ENCODE measurements at regions of chr7 and their contacts with region 1.

Region 1: GRCh38 chr7:36670585-36671431 is 53.5 kb downstream of the AOAH start:
- DNase-seq: peak; percentile 37 to 80 (median 74)
- ATAC-seq: peak; percentile 98
- H3K4me3 ChIP-seq: no peak overlapping the region
- H3K4me3 Mint-ChIP-seq: peak overlapping the region in 7 of 10 donors; percentile 13 to 84 (median 54)
- H3K27ac ChIP-seq: no peak overlapping the region
- H3K27ac Mint-ChIP-seq: peak overlapping the region in 7 of 9 donors; percentile 19 to 92 (median 64)
- H3K4me1 ChIP-seq: peaks cover 0 to 7% of the 10 kb centered on the region in 2 donors
- H3K4me1 Mint-ChIP-seq: peaks cover 17 to 44% (median 37%) of the 10 kb centered on the region in 7 donors
- H3K27me3 ChIP-seq: no peaks in the 10 kb centered on the region
- H3K27me3 Mint-ChIP-seq: no peaks in the 10 kb centered on the region

Region 2: GRCh38 chr7:36152756-36153570 is 517.8 kb before region 1 on chr7 and contains the start of gene EEPD1:
- CTCF ChIA-PET with region 1: no interaction called
- POLR2A ChIA-PET with region 1: no interaction called
- intact Hi-C with region 1: loop called in 1 of 2 experiments (anchors 5 kb)
- DNase-seq: peak; percentile 99 to 100 (median 100)
- ATAC-seq: peak; percentile 96
- H3K4me3 ChIP-seq: peak within 1 kb of the TSS; percentile 72
- H3K4me3 Mint-ChIP-seq: peak within 1 kb of the TSS; percentile 70 to 93 (median 84)
- H3K27ac ChIP-seq: peak within 1 kb of the TSS; percentile 73
- H3K27ac Mint-ChIP-seq: peak within 1 kb of the TSS in 8 of 9 donors; percentile 10 to 87 (median 74)
- H3K4me1 ChIP-seq: peaks cover 7 to 16% of the 10 kb centered on the region in 2 donors
- H3K4me1 Mint-ChIP-seq: peaks cover 12 to 31% (median 24%) of the 10 kb centered on the region in 7 donors
- H3K27me3 ChIP-seq: no peaks in the 10 kb centered on the region
- H3K27me3 Mint-ChIP-seq: peaks cover 0 to 21% (median 0%) of the 10 kb centered on the region in 5 donors
- total RNA-seq, gene EEPD1: 2.2 to 13.2 (median 3.7) TPM

Region 3: DNA sequence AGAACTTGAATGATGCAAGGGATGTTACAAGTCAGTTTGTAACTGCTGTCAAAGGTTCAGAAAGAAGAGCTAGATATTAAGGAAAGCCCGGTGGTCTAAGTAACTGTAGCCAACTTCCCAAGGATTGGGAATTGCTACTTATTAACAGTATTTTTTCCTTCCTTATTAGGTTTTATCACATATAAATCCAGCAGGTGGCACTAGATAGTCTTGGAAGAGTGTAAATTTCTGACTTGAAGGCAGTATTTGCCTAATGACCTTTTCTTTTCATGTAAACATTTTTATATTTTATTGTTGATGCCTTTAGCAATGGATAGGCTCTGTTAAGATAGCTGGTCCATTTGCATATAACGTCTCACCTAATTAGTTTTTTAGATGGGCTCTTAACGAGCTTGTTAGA is 229.9 kb before region 1 on chr7:
- CTCF ChIA-PET with region 1: interaction called, 11 read pairs
- POLR2A ChIA-PET with region 1: no interaction called
- intact Hi-C with region 1: loop called (anchors 1 to 5 kb)
- DNase-seq: peak in 4 of 9 donors; percentile 3 to 19 (median 10)
- ATAC-seq: no peak
- H3K4me3 ChIP-seq: no peak overlapping the region
- H3K4me3 Mint-ChIP-seq: no peak overlapping the region
- H3K27ac ChIP-seq: no peak overlapping the region
- H3K27ac Mint-ChIP-seq: no peak overlapping the region
- H3K4me1 ChIP-seq: no peaks in the 10 kb centered on the region
- H3K4me1 Mint-ChIP-seq: no peaks in the 10 kb centered on the region
- H3K27me3 ChIP-seq: no peaks in the 10 kb centered on the region
- H3K27me3 Mint-ChIP-seq: no peaks in the 10 kb centered on the region

Region 4: GRCh38 chr7:36605261-36606051 is 65.4 kb before region 1 on chr7:
- CTCF ChIA-PET with region 1: interaction called, 6 read pairs
- POLR2A ChIA-PET with region 1: interaction called, 3 read pairs
- intact Hi-C with region 1: loop called in 1 of 2 experiments (anchors 2 kb)
- DNase-seq: peak in 5 of 9 donors; percentile 9 to 25 (median 20)
- ATAC-seq: no peak
- H3K4me3 ChIP-seq: no peak overlapping the region
- H3K4me3 Mint-ChIP-seq: peak overlapping the region in 8 of 10 donors; percentile 57 to 86 (median 66)
- H3K27ac ChIP-seq: peak overlapping the region; percentile 31
- H3K27ac Mint-ChIP-seq: peak overlapping the region in 8 of 9 donors; percentile 64 to 93 (median 90)
- H3K4me1 ChIP-seq: peaks cover 0 to 49% of the 10 kb centered on the region in 2 donors
- H3K4me1 Mint-ChIP-seq: peaks cover 41 to 84% (median 69%) of the 10 kb centered on the region in 7 donors
- H3K27me3 ChIP-seq: no peaks in the 10 kb centered on the region
- H3K27me3 Mint-ChIP-seq: no peaks in the 10 kb centered on the region

Region 5: DNA sequence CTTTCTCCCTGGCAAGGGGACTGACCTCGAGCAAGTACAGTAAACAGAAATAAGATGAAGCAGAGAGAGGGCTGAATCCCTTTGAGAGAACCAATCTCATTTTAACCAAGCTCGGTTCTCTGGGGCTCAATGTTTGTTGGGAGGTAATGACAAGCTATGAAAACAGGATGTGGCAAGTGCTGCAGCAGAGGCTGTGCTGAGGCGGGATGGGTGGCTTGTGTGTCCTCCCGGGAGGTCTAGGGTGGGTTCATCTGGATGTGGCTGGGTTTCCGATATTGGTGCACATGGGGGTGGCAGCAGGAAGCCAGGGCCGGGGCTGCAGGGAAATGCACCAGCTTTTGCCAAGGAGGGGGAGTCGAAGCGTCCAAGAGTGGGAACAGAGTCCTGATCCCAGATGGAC is 31.0 kb before region 1 on chr7:
- CTCF ChIA-PET with region 1: interaction called, 31 read pairs
- POLR2A ChIA-PET with region 1: interaction called, 16 read pairs
- intact Hi-C with region 1: loop called in 1 of 2 experiments (anchors 2 kb)
- DNase-seq: peak; percentile 14 to 81 (median 67)
- ATAC-seq: peak; percentile 88
- H3K4me3 ChIP-seq: peak overlapping the region; percentile 3
- H3K4me3 Mint-ChIP-seq: peak overlapping the region; percentile 54 to 83 (median 67)
- H3K27ac ChIP-seq: peak overlapping the region; percentile 67
- H3K27ac Mint-ChIP-seq: peak overlapping the region; percentile 85 to 99 (median 95)
- H3K4me1 ChIP-seq: peaks cover 46 to 70% of the 10 kb centered on the region in 2 donors
- H3K4me1 Mint-ChIP-seq: peaks cover 42 to 100% (median 95%) of the 10 kb centered on the region in 7 donors
- H3K27me3 ChIP-seq: no peaks in the 10 kb centered on the region
- H3K27me3 Mint-ChIP-seq: no peaks in the 10 kb centered on the region